CD8-positive, alpha-beta memory T cell (primary cell): ENCODE measurements at regions of chr14 and their contacts with region 1.

Region 1: GRCh38 chr14:73568381-73568781 is 632 bp upstream of the ACOT2 start:
- DNase-seq: no peak
- H3K4me3 ChIP-seq: peak overlapping the region; percentile 83
- H3K4me3 Mint-ChIP-seq: peak overlapping the region; percentile 90 to 99 (median 93)
- H3K27ac ChIP-seq: peak overlapping the region; percentile 67
- H3K27ac Mint-ChIP-seq: peak overlapping the region; percentile 94 to 99 (median 96)
- H3K4me1 ChIP-seq: peaks cover 23% of the 10 kb centered on the region
- H3K4me1 Mint-ChIP-seq: peaks cover 45 to 59% (median 49%) of the 10 kb centered on the region in 3 donors
- H3K27me3 ChIP-seq: no peaks in the 10 kb centered on the region
- H3K27me3 Mint-ChIP-seq: no peaks in the 10 kb centered on the region

Region 2: DNA sequence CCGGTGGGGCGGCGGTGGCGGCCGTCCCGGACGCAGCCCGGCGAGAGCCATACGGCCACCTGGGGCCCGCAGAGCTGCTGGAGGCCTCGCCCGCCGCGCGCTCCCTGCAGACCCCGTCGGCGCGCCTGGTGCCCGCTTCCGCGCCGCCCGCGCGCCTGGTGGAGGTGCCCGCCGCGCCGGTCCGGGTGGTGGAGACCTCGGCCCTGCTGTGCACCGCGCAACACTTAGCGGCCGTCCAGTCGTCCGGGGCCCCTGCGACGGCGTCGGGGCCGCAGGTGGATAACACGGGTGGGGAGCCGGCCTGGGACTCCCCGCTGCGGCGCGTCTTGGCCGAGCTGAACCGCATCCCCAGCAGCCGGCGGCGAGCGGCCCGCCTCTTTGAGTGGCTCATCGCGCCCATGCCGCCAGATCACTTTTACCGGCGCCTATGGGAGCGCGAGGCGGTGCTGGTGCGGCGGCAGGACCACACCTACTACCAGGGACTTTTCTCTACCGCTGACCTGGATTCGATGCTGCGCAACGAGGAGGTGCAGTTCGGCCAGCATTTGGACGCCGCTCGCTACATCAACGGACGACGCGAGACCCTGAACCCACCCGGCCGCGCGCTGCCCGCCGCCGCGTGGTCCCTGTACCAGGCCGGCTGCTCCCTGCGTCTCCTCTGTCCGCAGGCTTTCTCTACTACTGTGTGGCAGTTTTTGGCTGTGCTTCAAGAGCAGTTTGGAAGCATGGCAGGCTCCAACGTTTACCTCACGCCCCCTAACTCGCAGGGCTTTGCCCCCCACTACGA is 76.9 kb before region 1 on chr14:
- CTCF ChIA-PET with region 1: interaction called, 12 read pairs
- POLR2A ChIA-PET with region 1: interaction called, 7 read pairs
- DNase-seq: peak; percentile 57 to 80 (median 67)
- H3K4me3 ChIP-seq: peak overlapping the region; percentile 85
- H3K4me3 Mint-ChIP-seq: peak overlapping the region; percentile 86 to 98 (median 87)
- H3K27ac ChIP-seq: peak overlapping the region; percentile 88
- H3K27ac Mint-ChIP-seq: peak overlapping the region in 7 of 8 donors; percentile 80 to 92 (median 88)
- H3K4me1 ChIP-seq: peaks cover 31% of the 10 kb centered on the region
- H3K4me1 Mint-ChIP-seq: peaks cover 43 to 61% (median 61%) of the 10 kb centered on the region in 3 donors
- H3K27me3 ChIP-seq: no peaks in the 10 kb centered on the region
- H3K27me3 Mint-ChIP-seq: no peaks in the 10 kb centered on the region

Region 3: GRCh38 chr14:73503648-73504047 is 64.7 kb before region 1 on chr14:
- CTCF ChIA-PET with region 1: interaction called, 44 read pairs
- POLR2A ChIA-PET with region 1: interaction called, 11 read pairs
- DNase-seq: peak in 2 of 5 donors; percentile 6 to 55
- H3K4me3 ChIP-seq: no peak overlapping the region
- H3K4me3 Mint-ChIP-seq: peak overlapping the region in 4 of 7 donors; percentile 1 to 55 (median 45)
- H3K27ac ChIP-seq: no peak overlapping the region
- H3K27ac Mint-ChIP-seq: peak overlapping the region in 7 of 8 donors; percentile 7 to 76 (median 29)
- H3K4me1 ChIP-seq: no peaks in the 10 kb centered on the region
- H3K4me1 Mint-ChIP-seq: peaks cover 2 to 18% (median 8%) of the 10 kb centered on the region in 3 donors
- H3K27me3 ChIP-seq: no peaks in the 10 kb centered on the region
- H3K27me3 Mint-ChIP-seq: no peaks in the 10 kb centered on the region

Region 4: DNA sequence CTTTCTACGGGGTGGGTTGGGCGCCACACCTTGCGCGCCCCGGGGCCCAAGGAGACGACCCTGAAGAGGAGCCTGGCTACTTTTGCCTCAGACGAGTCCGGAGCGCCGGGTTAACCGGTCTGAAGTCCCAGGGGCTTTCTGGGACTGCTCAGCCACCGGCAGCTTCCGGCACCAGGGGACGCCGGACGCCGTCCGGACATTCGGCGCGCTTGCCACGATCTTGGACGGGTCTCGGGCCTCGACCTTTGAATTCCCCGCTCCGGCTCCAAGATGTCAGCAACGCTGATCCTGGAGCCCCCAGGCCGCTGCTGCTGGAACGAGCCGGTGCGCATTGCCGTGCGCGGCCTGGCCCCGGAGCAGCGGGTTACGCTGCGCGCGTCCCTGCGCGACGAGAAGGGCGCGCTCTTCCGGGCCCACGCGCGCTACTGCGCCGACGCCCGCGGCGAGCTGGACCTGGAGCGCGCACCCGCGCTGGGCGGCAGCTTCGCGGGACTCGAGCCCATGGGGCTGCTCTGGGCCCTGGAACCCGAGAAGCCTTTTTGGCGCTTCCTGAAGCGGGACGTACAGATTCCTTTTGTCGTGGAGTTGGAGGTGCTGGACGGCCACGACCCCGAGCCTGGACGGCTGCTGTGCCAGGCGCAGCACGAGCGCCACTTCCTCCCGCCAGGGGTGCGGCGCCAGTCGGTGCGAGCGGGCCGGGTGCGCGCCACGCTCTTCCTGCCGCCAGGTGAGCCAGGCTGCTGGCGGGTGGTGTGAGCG is 23.5 kb after region 1 on chr14 and contains the start of gene ACOT4:
- CTCF ChIA-PET with region 1: interaction called, 11 read pairs
- POLR2A ChIA-PET with region 1: interaction called, 19 read pairs
- DNase-seq: peak; percentile 23 to 74 (median 68)
- H3K4me3 ChIP-seq: peak within 1 kb of the TSS; percentile 84
- H3K4me3 Mint-ChIP-seq: peak within 1 kb of the TSS; percentile 73 to 93 (median 80)
- H3K27ac ChIP-seq: peak within 1 kb of the TSS; percentile 75
- H3K27ac Mint-ChIP-seq: peak within 1 kb of the TSS; percentile 37 to 84 (median 80)
- H3K4me1 ChIP-seq: peaks cover 4% of the 10 kb centered on the region
- H3K4me1 Mint-ChIP-seq: peaks cover 9 to 21% (median 16%) of the 10 kb centered on the region in 3 donors
- H3K27me3 ChIP-seq: no peaks in the 10 kb centered on the region
- H3K27me3 Mint-ChIP-seq: peaks cover 0 to 1% of the 10 kb centered on the region in 2 donors
- total RNA-seq, gene ACOT4: 4.0 to 5.0 TPM

Region 5: GRCh38 chr14:73613046-73613383 is 44.6 kb after region 1 on chr14:
- CTCF ChIA-PET with region 1: interaction called, 16 read pairs
- POLR2A ChIA-PET with region 1: interaction called, 46 read pairs
- DNase-seq: no peak
- H3K4me3 ChIP-seq: peak overlapping the region; percentile 75
- H3K4me3 Mint-ChIP-seq: peak overlapping the region; percentile 84 to 95 (median 90)
- H3K27ac ChIP-seq: peak overlapping the region; percentile 45
- H3K27ac Mint-ChIP-seq: peak overlapping the region; percentile 66 to 97 (median 81)
- H3K4me1 ChIP-seq: peaks cover 8% of the 10 kb centered on the region
- H3K4me1 Mint-ChIP-seq: peaks cover 0 to 3% (median 0%) of the 10 kb centered on the region in 3 donors
- H3K27me3 ChIP-seq: no peaks in the 10 kb centered on the region
- H3K27me3 Mint-ChIP-seq: peaks cover 2 to 7% of the 10 kb centered on the region in 2 donors

Region 6: DNA sequence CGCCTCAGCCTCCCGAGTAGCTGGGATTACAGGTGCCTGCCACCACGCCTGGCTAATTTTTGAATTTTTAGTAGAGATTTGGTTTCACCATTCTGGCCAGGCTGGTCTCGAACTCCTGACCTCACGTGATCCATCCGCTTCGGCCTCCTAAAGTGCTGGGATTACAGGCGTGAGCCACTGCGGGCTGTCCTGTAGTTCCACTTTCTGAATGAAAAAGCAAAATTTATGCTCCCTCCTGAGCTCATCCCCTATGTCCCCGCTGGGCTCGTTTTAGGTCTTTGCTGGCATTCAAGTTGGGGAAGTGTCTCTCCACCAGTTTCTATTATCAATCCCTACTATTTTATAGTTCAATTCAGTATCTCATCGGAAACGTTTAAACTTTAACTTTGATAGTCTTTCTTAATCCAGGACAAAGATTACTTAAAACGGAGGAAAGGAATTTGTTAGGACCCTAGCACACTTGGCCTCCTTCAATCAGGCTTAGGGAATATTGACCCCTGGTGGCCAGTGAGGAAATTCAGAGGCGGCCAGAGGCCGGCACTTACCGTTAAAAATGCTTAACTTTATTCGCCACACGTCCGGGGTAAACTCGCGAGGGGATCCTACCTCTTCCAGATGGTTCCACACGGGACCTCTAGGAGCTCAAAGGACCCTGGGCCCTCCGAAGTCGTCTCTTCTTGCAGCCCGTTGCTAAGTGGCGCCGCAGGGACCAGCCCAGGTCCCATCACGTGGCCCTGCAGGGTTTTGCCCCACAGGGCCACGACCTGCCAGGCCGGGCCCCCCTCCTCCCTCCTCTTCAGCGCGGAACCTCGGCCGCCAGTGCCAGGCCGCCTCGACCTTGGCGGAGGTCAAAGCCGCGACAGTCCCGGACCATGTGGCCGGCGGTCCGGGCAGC is 65.0 kb after region 1 on chr14:
- CTCF ChIA-PET with region 1: interaction called, 16 read pairs
- POLR2A ChIA-PET with region 1: no interaction called
- DNase-seq: peak; percentile 30 to 70 (median 52)
- H3K4me3 ChIP-seq: peak overlapping the region; percentile 66
- H3K4me3 Mint-ChIP-seq: peak overlapping the region; percentile 67 to 90 (median 81)
- H3K27ac ChIP-seq: no peak overlapping the region
- H3K27ac Mint-ChIP-seq: peak overlapping the region in 5 of 8 donors; percentile 10 to 73 (median 49)
- H3K4me1 ChIP-seq: peaks cover 5% of the 10 kb centered on the region
- H3K4me1 Mint-ChIP-seq: peaks cover 5 to 7% (median 5%) of the 10 kb centered on the region in 3 donors
- H3K27me3 ChIP-seq: no peaks in the 10 kb centered on the region
- H3K27me3 Mint-ChIP-seq: peaks cover 3 to 20% of the 10 kb centered on the region in 2 donors